CD4-positive, alpha-beta T cell (primary cell): ENCODE measurements at regions of chr15 and their contacts with region 1.

Region 1: DNA sequence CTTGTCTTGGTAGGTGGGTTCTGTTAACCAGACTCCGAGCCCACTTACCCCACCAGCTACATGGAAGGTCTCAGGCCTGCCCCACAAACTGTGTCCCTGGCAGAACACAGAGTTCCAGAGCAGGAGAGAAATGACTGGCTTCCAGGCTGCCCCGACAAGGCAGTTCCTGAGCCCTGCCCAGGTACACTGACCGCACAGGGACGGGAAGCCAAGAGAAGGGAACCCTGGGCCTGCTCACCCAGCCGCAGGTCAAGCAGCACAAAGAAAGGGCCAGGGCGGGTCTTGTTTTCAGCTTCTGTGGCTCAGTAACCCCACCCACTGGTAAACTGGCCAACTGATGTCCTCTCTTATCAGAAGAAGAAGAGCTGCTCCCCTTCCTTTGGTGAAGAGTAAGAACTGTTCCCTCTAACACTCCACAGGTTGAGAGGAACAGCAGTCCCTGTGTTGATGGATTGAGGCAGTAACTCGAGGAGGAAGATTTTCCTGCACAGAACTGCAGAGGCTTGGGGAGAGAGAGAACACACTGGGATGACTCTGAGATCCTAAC is 68.4 kb downstream of the CRTC3 start:
- DNase-seq: peak in 3 of 14 experiments; percentile 17 to 39 (median 34)
- ATAC-seq: no peak
- H3K4me3 ChIP-seq: no peak overlapping the region
- H3K4me3 Mint-ChIP-seq: peak overlapping the region; percentile 74
- H3K27ac ChIP-seq: peak overlapping the region; percentile 81 to 87
- H3K27ac Mint-ChIP-seq: peak overlapping the region; percentile 98
- H3K4me1 ChIP-seq: peaks cover 60% of the 10 kb centered on the region
- H3K4me1 Mint-ChIP-seq: peaks cover 82% of the 10 kb centered on the region
- H3K27me3 ChIP-seq: no peaks in the 10 kb centered on the region
- H3K27me3 Mint-ChIP-seq: no peaks in the 10 kb centered on the region
- CTCF ChIP-seq: no peak

Region 2: DNA sequence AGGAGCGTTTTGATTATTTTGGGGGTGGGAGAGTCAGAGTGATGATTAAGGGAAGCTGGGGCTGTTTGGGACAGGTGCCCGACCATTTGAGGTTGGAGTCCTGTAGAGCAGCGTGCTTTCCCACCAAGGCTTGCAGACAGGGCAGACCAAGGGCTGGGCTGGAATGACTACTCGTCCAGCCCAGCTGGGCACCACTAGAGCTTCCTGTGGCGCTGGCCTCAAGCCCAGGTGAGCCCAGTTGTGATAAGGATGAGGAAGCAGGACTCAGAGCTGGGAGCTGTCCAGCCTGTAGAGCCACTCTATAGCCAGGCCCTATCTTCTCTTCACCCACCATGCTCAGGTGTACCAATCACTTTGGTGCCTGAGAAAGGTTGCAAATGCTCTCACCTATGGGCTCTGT is 1870.7 kb before region 1 on chr15:
- CTCF ChIA-PET with region 1: no interaction called
- POLR2A ChIA-PET with region 1: no interaction called
- intact Hi-C with region 1: no loop called
- DNase-seq: no peak
- ATAC-seq: no peak
- H3K4me3 ChIP-seq: no peak overlapping the region
- H3K4me3 Mint-ChIP-seq: no peak overlapping the region
- H3K27ac ChIP-seq: no peak overlapping the region
- H3K27ac Mint-ChIP-seq: no peak overlapping the region
- H3K4me1 ChIP-seq: no peaks in the 10 kb centered on the region
- H3K4me1 Mint-ChIP-seq: no peaks in the 10 kb centered on the region
- H3K27me3 ChIP-seq: no peaks in the 10 kb centered on the region
- H3K27me3 Mint-ChIP-seq: peaks cover 10% of the 10 kb centered on the region
- CTCF ChIP-seq: no peak

Region 3: DNA sequence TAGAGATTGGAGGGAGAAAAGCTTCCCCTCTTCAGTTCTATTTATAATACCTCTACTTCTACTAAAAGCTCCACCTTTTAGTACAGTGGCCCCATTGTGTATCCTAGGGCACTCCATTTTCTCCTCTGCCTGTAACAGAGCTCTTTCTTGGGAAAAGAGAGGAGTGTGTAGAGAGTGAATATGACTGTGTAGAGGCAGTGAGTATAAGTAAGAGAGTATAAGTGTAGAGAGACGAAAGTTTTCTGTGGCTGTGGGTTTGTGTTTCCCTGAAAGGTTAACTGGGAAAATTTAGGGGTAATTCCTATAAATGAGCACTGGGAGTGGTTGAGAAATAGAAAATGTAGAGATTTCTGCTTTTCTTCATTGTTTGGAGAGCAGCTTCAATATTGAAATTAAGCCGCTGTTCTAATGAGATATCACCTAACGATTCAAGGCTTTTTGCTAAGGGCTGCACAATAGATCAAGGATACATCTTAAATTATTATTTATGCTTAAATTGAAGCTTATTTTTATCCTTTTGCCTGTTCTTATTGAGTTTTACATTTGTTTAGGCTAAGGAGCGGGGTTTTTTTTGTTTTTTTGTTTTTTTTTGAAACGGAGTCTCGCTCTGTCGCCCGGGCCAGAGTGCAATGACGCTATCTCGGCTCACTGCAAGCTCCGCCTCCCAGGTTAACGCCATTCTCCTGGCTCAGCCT is 203.2 kb before region 1 on chr15:
- CTCF ChIA-PET with region 1: no interaction called
- POLR2A ChIA-PET with region 1: no interaction called
- intact Hi-C with region 1: loop called in 1 of 2 experiments (anchors 10 kb)
- DNase-seq: no peak
- ATAC-seq: no peak
- H3K4me3 ChIP-seq: no peak overlapping the region
- H3K4me3 Mint-ChIP-seq: peak overlapping the region; percentile 35
- H3K27ac ChIP-seq: peak overlapping the region in 1 of 2 donors; percentile 31
- H3K27ac Mint-ChIP-seq: peak overlapping the region; percentile 6
- H3K4me1 ChIP-seq: peaks cover 51% of the 10 kb centered on the region
- H3K4me1 Mint-ChIP-seq: peaks cover 72% of the 10 kb centered on the region
- H3K27me3 ChIP-seq: no peaks in the 10 kb centered on the region
- H3K27me3 Mint-ChIP-seq: no peaks in the 10 kb centered on the region
- CTCF ChIP-seq: no peak

Region 4: DNA sequence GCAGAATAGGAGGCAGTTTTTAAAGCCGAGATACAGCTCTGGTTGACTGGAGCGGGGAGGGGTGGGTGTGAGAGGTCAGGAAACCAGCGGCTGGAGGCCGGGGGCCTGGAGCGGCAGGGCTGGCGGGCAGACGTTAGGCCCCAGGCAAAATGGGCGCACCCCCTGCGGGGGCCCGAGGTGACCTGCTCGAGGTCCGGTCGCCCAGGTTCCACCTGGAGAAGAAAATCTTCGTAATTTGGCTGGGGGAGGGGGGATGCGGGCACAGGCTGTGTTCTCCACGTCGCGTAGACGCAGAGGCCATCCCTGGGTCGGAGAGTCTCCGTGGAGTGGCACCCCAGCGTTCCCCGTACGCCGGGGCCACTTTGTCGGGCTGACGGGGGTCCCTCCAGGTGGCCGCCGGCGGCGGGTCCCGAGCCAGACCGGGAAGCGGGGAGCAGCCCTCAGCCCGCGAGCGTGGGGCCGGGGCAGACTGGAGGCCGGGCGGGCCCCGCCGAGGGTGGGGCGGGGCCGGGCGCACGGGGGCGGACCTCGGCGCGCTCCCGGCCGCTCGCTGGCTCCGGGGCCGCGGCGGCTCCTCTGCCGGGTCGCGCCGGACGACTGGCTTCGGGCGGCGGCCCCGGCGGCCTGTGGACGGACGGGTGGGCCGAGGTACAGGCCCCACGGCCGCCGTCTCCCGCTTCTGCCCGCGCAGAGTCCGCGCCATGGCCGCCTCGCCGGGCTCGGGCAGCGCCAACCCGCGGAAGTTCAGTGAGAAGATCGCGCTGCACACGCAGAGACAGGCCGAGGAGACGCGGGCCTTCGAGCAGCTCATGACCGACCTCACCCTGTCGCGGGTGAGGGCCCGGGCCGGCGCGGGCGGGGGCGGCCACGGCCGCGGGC is 68.5 kb before region 1 on chr15 and contains the start of gene CRTC3:
- CTCF ChIA-PET with region 1: no interaction called
- POLR2A ChIA-PET with region 1: interaction called, 16 read pairs
- intact Hi-C with region 1: loop called in 1 of 2 experiments (anchors 2 kb)
- DNase-seq: peak; percentile 31 to 85 (median 54)
- ATAC-seq: peak; percentile 80
- H3K4me3 ChIP-seq: peak within 1 kb of the TSS; percentile 94
- H3K4me3 Mint-ChIP-seq: peak within 1 kb of the TSS; percentile 97
- H3K27ac ChIP-seq: peak within 1 kb of the TSS; percentile 44 to 72
- H3K27ac Mint-ChIP-seq: peak within 1 kb of the TSS; percentile 92
- H3K4me1 ChIP-seq: peaks cover 36% of the 10 kb centered on the region
- H3K4me1 Mint-ChIP-seq: peaks cover 39% of the 10 kb centered on the region
- H3K27me3 ChIP-seq: no peaks in the 10 kb centered on the region
- H3K27me3 Mint-ChIP-seq: no peaks in the 10 kb centered on the region
- CTCF ChIP-seq: no peak
- total RNA-seq, gene CRTC3: 90.7 to 92.4 TPM

Region 5: DNA sequence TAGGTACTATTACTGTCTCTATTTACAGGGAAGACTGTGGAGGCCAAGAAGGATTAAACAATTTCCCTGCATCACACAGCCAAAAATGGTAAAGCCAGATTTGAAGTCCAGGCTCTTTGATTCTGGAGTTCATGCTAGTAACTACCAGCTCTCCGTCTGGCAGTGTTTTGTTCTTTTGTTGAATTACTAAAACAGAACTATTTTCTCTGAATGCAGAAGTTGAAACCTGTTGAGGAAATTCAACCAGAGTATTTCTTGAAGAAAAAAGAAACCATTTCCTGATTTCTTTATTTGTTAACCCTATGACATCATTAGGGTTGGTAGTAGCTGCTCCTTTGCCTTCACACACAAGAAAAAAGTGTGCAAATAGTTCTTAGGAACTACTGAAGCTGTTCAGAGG is 34.1 kb before region 1 on chr15:
- CTCF ChIA-PET with region 1: interaction called, 4 read pairs
- POLR2A ChIA-PET with region 1: interaction called, 12 read pairs
- intact Hi-C with region 1: loop called in 1 of 2 experiments (anchors 2 kb)
- DNase-seq: peak in 3 of 14 experiments; percentile 58 to 63 (median 61)
- ATAC-seq: peak; percentile 38
- H3K4me3 ChIP-seq: no peak overlapping the region
- H3K4me3 Mint-ChIP-seq: peak overlapping the region; percentile 85
- H3K27ac ChIP-seq: peak overlapping the region; percentile 62 to 68
- H3K27ac Mint-ChIP-seq: peak overlapping the region; percentile 93
- H3K4me1 ChIP-seq: peaks cover 79% of the 10 kb centered on the region
- H3K4me1 Mint-ChIP-seq: peaks cover 87% of the 10 kb centered on the region
- H3K27me3 ChIP-seq: no peaks in the 10 kb centered on the region
- H3K27me3 Mint-ChIP-seq: no peaks in the 10 kb centered on the region
- CTCF ChIP-seq: no peak

Region 6: DNA sequence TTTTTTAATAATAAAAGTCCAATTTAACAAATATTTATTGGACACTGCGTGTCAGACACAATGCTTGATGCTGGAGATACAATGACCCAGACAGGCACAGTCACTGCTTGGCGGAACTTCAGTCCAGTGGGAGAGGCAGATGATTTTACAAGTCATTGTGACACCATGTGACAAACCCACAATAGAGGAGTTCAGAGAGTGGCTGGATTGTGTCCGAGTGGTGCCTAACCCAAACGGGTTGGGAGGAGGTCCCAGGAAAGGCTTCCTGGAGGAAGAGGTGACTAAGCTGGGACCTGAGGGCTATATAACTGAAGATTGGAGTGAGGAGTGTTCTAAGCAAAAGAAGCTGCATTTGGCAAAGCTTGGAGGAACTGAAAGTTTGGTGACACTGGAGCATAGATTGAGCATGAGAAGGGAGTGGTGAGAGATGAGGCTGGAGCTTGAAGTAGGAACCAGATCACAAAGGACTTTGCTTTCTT is 27.0 kb before region 1 on chr15:
- CTCF ChIA-PET with region 1: no interaction called
- POLR2A ChIA-PET with region 1: interaction called, 17 read pairs
- intact Hi-C with region 1: no loop called
- DNase-seq: peak in 2 of 14 experiments; percentile 53 to 60
- ATAC-seq: no peak
- H3K4me3 ChIP-seq: no peak overlapping the region
- H3K4me3 Mint-ChIP-seq: no peak overlapping the region
- H3K27ac ChIP-seq: peak overlapping the region in 1 of 2 donors; percentile 32
- H3K27ac Mint-ChIP-seq: peak overlapping the region; percentile 77
- H3K4me1 ChIP-seq: peaks cover 77% of the 10 kb centered on the region
- H3K4me1 Mint-ChIP-seq: peaks cover 89% of the 10 kb centered on the region
- H3K27me3 ChIP-seq: no peaks in the 10 kb centered on the region
- H3K27me3 Mint-ChIP-seq: no peaks in the 10 kb centered on the region
- CTCF ChIP-seq: no peak

Region 7: DNA sequence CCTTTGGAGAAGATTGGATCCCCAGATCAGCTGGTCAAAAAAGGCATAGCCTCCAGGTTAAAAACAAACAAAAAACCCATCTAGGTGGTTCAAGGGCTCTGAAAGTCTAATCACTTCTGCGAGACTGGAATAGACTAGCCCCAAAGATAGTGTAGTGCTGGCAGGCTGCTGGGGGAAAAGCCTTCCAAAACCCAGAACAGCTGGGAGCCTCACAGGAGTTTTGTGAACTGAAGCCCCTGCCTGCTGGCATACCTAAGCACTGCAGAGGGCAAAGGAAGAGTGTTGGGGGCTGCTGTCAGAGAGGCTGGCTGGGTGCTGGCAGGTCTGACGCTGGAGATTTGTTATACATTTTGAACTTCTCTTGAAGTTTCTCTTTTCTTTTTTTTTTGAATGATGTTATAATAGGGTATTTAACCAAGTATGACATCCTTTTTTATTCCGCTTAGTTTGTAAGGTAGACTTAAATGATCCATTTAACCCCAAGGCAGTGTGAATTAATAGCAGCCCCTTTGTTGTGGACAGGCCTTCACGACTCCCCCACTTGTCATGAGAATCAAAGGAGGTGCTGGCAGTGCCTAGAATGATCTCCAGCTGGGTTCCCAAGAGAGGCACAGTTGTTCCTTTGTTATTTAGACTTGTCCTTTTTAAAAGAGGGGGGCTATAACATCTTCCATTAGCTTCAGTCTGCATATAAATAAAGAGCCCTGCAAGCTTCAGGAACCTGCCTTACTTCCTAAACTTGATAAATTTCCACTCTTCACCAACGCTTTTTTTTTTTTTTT is 14.4 kb before region 1 on chr15:
- CTCF ChIA-PET with region 1: no interaction called
- POLR2A ChIA-PET with region 1: interaction called, 9 read pairs
- intact Hi-C with region 1: loop called in 1 of 2 experiments (anchors 1 kb)
- DNase-seq: no peak
- ATAC-seq: no peak
- H3K4me3 ChIP-seq: no peak overlapping the region
- H3K4me3 Mint-ChIP-seq: no peak overlapping the region
- H3K27ac ChIP-seq: no peak overlapping the region
- H3K27ac Mint-ChIP-seq: peak overlapping the region; percentile 89
- H3K4me1 ChIP-seq: peaks cover 59% of the 10 kb centered on the region
- H3K4me1 Mint-ChIP-seq: peaks cover 66% of the 10 kb centered on the region
- H3K27me3 ChIP-seq: no peaks in the 10 kb centered on the region
- H3K27me3 Mint-ChIP-seq: no peaks in the 10 kb centered on the region
- CTCF ChIP-seq: no peak

Region 8: DNA sequence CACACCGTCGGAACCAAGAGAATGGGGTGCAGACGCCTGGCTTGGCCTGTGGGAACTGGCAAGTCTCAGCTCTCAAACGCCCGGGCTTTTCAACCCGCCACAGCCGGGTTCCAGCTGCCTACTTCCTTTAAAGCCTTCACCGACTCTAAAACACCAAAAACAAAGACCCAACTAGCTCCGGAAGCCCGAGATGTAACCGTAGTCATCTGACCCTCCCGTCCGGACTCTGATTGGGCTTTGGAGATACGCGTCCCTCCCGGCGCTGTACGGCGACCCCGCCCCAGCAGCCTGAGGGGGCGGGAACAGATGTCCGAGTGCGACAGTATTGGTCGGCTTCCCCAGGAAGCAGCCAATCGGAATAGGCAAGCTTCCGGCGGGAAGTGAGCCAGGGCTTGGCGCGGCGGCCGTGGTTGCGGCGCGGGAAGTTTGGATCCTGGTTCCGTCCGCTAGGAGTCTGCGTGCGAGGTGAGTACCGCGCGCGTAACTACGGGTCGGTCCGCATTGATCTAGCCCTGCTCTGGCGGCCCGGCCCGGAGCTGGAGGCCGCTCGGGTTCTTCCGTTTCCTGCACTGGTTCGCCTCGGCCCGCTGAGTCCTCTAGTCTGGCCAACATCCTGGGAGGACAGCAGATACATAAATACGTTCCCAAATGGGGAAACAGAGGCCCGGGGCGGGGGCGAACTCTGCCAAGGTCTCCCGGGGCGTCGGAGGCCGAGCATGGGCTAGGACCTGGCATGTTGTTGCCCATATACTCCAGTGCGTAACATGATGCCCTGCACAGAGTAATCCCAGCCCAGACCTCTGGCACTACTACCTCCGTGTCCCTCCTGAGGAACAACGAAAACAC is 119.1 kb after region 1 on chr15 and contains the start of gene BLM:
- CTCF ChIA-PET with region 1: no interaction called
- POLR2A ChIA-PET with region 1: no interaction called
- intact Hi-C with region 1: loop called in 1 of 2 experiments (anchors 1 kb)
- DNase-seq: peak; percentile 88 to 99 (median 93)
- ATAC-seq: peak; percentile 99
- H3K4me3 ChIP-seq: peak within 1 kb of the TSS; percentile 78
- H3K4me3 Mint-ChIP-seq: peak within 1 kb of the TSS; percentile 99
- H3K27ac ChIP-seq: peak within 1 kb of the TSS; percentile 82 to 92
- H3K27ac Mint-ChIP-seq: peak within 1 kb of the TSS; percentile 96
- H3K4me1 ChIP-seq: peaks cover 13% of the 10 kb centered on the region
- H3K4me1 Mint-ChIP-seq: peaks cover 29% of the 10 kb centered on the region
- H3K27me3 ChIP-seq: no peaks in the 10 kb centered on the region
- H3K27me3 Mint-ChIP-seq: no peaks in the 10 kb centered on the region
- CTCF ChIP-seq: peak; percentile 27
- total RNA-seq, gene BLM: 1.6 to 1.8 TPM